ENCODE measurements at regions of chr11 and their contacts with region 1.

Region 1: DNA sequence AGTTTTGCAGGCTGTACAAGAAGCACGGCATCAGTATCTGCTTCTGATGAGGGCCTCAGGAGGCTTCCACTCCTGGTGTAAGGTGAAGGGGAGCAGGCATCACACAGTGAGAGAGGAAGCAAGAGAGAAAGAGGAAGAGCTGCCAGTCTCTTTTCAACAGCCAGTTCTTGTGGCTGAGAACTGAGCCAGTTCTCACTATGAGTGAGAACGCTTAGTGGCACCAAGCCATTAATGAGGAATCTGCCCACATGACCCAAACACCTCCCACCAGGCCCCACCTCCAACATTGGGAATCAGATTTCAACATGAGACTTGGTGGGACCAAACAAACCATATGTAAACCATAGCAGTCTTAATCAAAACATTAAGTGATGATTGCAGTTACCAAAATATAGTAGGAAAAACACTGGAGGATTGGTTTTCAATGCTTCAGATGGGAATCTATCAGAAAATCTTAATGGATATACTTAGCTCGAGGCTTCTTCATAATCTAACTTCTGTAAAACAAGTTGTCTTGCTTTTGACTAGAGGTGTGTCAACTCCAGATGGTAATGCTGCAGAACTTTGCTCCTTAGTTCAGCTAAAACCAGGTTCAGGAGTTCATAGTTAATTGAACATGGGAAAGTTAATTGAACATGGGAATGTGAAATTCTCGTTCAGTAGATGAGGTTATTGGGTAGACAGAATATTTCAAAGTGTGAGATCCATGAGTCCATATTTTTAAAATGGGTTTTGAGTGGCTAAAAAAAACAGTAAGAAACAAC is 12.2 kb downstream of the FAR1 start:
- DNase-seq: no peak
- H3K4me3 ChIP-seq: no peak overlapping the region
- CTCF ChIP-seq: no peak
- POLR2A ChIP-seq: no peak

Region 2: GRCh38 chr11:12827929-12828812 is 852.5 kb before region 1 on chr11:
- intact Hi-C with region 1: no loop called
- DNase-seq: peak in 1 of 2 donors; percentile 87
- H3K4me3 ChIP-seq: no peak overlapping the region
- CTCF ChIP-seq: no peak
- POLR2A ChIP-seq: no peak

Region 3: GRCh38 chr11:13661074-13661623 is 19.5 kb before region 1 on chr11:
- intact Hi-C with region 1: loop called (anchors 1 kb)
- DNase-seq: no peak
- H3K4me3 ChIP-seq: no peak overlapping the region
- CTCF ChIP-seq: no peak
- POLR2A ChIP-seq: no peak